MCF 10A (cell line): ENCODE measurements at regions of chr22 and their contacts with region 1.

Region 1: DNA sequence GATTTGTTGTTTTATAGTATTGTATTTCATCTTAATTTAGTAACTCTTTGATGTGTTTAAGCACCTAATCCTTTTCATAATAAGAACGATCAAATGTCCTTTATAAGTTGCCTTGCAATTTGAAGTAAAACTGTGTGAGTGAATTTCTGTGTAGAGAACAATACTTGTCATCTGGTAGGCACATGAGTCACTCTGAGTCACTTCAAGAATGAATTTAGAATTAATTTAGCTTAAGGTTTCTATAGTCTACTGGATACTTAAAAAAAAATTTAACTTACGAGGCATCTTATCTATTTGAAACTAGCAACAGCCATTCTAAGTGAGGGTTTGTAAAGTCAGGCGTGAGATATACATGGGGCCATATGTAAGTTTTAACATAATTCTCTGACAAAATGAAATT is 85.0 kb downstream of the C22orf31 start:
- DNase-seq: peak; percentile 58
- H3K4me3 Mint-ChIP-seq: peak overlapping the region; percentile 30
- H3K27ac Mint-ChIP-seq: peak overlapping the region; percentile 25
- H3K4me1 Mint-ChIP-seq: peaks cover 29% of the 10 kb centered on the region
- H3K27me3 Mint-ChIP-seq: no peaks in the 10 kb centered on the region
- CTCF ChIP-seq: no peak

Region 2: GRCh38 chr22:28882878-28883656 is 93.5 kb before region 1 on chr22 and contains the start of gene ZNRF3:
- CTCF ChIA-PET with region 1: interaction called, 3 read pairs
- POLR2A ChIA-PET with region 1: interaction called, 23 read pairs
- intact Hi-C with region 1: loop called (anchors 2 kb)
- DNase-seq: peak; percentile 92
- H3K4me3 Mint-ChIP-seq: peak within 1 kb of the TSS; percentile 78
- H3K27ac Mint-ChIP-seq: no peak within 1 kb of the TSS
- H3K4me1 Mint-ChIP-seq: peaks cover 12% of the 10 kb centered on the region
- H3K27me3 Mint-ChIP-seq: no peaks in the 10 kb centered on the region
- CTCF ChIP-seq: no peak
- total RNA-seq, gene ZNRF3: 7.1 and 7.9 TPM in 2 replicates